AG04449 (cell line): ENCODE measurements at regions of chr4 and their contacts with region 1.

Region 1: GRCh38 chr4:118352843-118353533 is at the start of gene PRSS12:
- DNase-seq: no peak
- H3K4me3 ChIP-seq: peak within 1 kb of the TSS; percentile 81
- CTCF ChIP-seq: peak; percentile 84

Region 2: DNA sequence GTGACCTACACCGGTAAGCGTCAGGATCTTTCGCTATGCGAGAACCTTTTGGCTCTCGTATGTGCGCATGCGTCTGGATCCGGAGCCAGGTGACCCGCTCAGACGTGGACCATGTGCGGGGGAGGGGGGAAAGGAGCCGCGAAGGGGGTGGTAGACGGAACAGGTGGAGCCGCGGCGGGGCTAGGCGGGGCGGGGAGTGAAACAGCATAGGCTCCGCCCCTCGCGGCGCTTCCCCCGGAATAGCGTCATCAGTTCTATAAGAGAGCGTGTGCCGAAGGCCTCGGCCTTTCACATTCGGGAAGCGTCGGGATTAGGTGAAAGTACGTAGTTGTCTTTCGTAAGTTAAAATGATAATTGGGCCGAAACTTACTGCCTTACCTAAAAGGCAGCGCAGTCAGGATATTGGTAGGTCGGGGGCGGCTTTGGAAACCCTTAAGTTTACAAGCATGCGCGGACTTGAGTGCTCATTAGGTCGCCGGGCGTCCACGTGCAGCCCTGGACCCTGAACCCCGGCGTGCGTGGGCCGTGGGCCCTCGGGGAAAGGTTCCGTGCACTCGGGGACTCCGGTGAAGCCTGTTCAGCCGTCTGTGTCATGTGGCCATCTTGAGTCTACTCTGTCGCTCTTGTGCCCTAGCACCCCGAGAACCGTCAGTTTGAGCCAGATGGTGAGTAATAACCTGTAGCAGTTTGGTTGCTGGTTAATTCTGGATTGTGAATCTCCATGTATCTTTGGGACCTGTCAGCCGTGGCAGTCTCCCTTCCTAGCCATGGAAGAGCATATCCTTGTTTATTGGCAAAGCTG is 74.3 kb before region 1 on chr4:
- CTCF ChIA-PET with region 1: interaction called, 18 read pairs
- POLR2A ChIA-PET with region 1: interaction called, 12 read pairs
- DNase-seq: peak; percentile 33
- H3K4me3 ChIP-seq: peak overlapping the region; percentile 89
- CTCF ChIP-seq: no peak

Region 3: DNA sequence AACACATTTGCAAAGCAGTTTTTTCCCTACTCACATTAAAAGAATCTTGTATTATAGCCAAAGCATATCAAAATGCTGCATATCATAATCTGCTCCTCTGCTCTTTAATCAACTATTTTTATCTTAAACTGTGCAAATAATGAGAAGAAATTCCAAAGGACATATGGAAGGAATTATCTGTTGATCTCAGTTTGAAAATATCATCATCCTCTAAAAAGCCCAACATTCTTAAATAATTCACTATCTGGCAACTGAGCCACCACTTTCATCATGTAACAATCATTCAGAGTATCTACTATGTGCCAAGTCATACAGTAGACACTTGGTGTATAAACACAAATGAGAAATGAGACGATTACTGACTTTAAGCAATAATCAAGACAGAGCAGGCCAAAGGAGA is 63.2 kb before region 1 on chr4:
- CTCF ChIA-PET with region 1: interaction called, 17 read pairs
- POLR2A ChIA-PET with region 1: no interaction called
- DNase-seq: peak; percentile 93
- H3K4me3 ChIP-seq: no peak overlapping the region
- CTCF ChIP-seq: no peak

Region 4: DNA sequence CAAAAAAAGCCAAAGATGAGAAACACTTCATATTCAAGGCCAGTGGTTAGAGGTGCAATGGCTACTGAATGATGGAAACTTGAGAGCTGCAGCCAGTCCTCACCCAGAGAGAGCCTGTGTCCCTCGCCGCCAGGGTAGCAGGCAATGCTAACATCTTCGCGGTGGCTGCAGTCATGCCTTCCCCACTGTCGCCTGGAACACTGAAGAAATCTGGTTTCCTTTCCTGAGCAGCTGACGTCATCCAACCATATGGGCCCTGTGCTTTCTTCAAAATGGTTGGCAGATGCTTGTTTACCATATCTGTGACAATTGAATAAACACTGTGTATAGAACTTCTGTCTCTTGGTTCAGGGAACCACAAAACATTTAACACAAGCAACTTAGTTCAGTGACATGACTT is 39.9 kb before region 1 on chr4:
- CTCF ChIA-PET with region 1: interaction called, 14 read pairs
- POLR2A ChIA-PET with region 1: no interaction called
- DNase-seq: no peak
- H3K4me3 ChIP-seq: no peak overlapping the region
- CTCF ChIP-seq: no peak

Region 5: GRCh38 chr4:118338981-118339765 is 13.8 kb before region 1 on chr4:
- CTCF ChIA-PET with region 1: interaction called, 145 read pairs
- POLR2A ChIA-PET with region 1: interaction called, 5 read pairs
- DNase-seq: no peak
- H3K4me3 ChIP-seq: no peak overlapping the region
- CTCF ChIP-seq: no peak

Region 6: GRCh38 chr4:118373614-118374255 is 20.7 kb after region 1 on chr4:
- CTCF ChIA-PET with region 1: interaction called, 135 read pairs
- POLR2A ChIA-PET with region 1: no interaction called
- DNase-seq: peak; percentile 81
- H3K4me3 ChIP-seq: no peak overlapping the region
- CTCF ChIP-seq: no peak